Esophagus muscularis mucosa (tissue), 4 donors: ENCODE measurements at regions of chr5 and their contacts with region 1.

Region 1: DNA sequence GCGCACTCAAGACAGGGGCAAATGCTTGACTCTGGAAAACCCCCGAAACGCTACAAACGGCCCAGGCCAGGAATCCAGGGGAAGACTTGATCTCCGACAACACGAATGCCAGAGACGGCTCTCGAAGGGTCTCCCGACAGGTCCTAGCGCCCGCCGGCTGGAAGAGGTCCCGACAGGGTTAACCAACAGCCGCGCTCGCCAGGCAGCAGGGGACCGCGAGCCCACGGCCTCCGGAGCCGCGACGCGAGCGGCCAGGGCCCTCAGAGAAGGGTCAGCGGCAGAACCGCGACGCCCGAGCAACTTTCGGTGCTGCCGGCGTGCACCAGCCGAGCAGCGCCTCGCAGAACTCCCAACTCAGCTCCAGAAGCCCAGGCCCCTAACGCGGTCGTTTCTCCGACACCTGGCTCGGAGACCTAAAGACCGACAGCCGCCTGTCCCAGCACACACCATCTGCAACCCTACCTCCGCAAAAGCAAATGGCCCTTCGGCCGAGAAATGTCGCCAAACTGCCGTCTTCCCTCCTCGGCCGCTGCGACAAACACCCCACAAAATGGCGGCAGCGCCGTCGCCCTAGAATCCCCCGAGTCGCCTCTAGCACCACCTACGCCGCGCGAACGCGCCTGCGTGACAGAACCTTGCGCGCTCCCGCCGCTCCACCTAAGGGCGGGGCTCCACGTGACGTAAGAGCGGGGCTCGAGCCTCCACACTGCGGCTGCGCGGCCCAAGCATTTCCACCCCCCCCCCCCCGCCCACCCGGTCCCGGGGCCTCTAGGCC is at the start of gene CLK4:
- DNase-seq: peak; percentile 98
- H3K4me3 ChIP-seq: peak within 1 kb of the TSS; percentile 80 to 96 (median 91)
- H3K27ac ChIP-seq: peak within 1 kb of the TSS; percentile 94 to 98 (median 96)
- H3K4me1 ChIP-seq: peaks cover 28 to 41% (median 40%) of the 10 kb centered on the region in 4 donors
- H3K27me3 ChIP-seq: no peaks in the 10 kb centered on the region
- CTCF ChIP-seq: no peak
- EP300 ChIP-seq: no peak
- POLR2A ChIP-seq: peak; percentile 8
- total RNA-seq, gene CLK4: 16.7 to 24.9 (median 18.9) TPM

Region 2: GRCh38 chr5:178590141-178590923 is 36.3 kb before region 1 on chr5 and contains the start of gene COL23A1:
- intact Hi-C with region 1: loop called (anchors 5 kb)
- DNase-seq: no peak
- H3K4me3 ChIP-seq: peak within 1 kb of the TSS; percentile 57 to 68 (median 62)
- H3K27ac ChIP-seq: peak within 1 kb of the TSS; percentile 46 to 64 (median 54)
- H3K4me1 ChIP-seq: peaks cover 16 to 28% (median 24%) of the 10 kb centered on the region in 4 donors
- H3K27me3 ChIP-seq: peaks cover 0 to 21% (median 0%) of the 10 kb centered on the region in 4 donors
- CTCF ChIP-seq: peak; percentile 68 to 73 (median 69)
- EP300 ChIP-seq: no peak
- POLR2A ChIP-seq: peak; percentile 19
- total RNA-seq, gene COL23A1: 0.83 to 1.8 (median 1.5) TPM

Region 3: DNA sequence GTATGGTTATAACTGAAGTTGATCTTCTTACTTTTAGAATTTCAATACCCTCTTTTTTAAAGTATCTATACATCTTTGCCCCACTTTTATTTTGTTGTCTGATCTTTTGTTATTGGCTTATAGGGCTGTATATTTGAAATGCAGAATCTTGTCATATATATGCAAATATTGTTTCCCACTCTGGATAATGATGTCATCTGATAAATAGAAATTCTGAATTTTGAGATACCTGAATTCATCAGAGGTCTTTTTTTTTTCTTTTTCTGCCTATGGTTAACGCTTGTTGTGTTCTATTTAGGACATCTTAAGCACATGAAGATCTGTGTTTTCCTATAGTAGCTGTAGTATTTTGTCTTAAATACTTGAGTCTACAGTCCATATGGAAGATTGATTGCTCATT is 332.1 kb after region 1 on chr5:
- intact Hi-C with region 1: no loop called
- DNase-seq: no peak
- H3K4me3 ChIP-seq: no peak overlapping the region
- H3K27ac ChIP-seq: no peak overlapping the region
- H3K4me1 ChIP-seq: no peaks in the 10 kb centered on the region
- H3K27me3 ChIP-seq: no peaks in the 10 kb centered on the region
- CTCF ChIP-seq: no peak
- EP300 ChIP-seq: no peak
- POLR2A ChIP-seq: no peak